MCF 10A (cell line): ENCODE measurements at regions of chrX and their contacts with region 1.

Region 1: DNA sequence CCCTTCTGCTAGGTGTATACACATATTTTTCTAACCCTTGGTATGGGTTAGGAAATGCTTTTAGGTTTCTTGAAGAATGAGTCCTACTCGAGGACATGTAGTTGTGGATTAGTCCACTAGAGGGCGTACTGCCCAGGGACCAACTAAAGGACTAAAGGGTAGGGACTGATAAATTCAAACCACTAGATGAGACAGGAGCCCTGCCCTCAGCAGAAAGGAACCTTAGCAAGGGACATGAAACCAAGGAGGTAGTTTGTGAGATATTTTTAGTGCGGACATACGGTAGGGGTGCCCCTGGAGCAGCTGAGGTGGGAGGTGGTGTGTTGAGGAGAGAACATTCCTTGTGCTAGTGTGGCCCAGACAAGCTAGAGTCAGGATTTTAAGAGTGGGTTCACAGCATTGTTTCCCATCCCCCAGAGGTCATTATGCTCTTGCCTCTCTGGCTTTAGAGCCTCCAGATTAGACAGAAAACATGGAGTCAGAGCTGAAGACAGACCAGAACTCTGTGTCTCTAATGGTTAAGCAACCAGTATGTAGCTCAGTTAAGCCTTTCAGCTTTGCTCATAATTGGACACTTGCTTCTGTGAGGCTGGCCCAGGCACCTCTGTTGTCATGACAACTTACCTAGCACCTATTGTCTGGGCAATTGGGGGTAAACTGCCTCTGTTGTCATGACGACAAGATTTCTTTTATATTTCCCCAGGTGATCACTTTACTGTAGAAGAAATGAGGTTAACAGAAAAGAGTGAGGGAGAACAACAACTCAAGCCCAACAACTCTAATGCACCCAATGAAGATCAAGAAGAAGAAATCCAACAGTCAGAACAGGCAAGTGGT is 1.0 kb downstream of the TMEM31 start:
- DNase-seq: peak; percentile 79
- H3K4me3 Mint-ChIP-seq: no peak overlapping the region
- H3K27ac Mint-ChIP-seq: no peak overlapping the region
- H3K4me1 Mint-ChIP-seq: peaks cover 5% of the 10 kb centered on the region
- H3K27me3 Mint-ChIP-seq: peaks cover 68% of the 10 kb centered on the region
- CTCF ChIP-seq: peak; percentile 54

Region 2: GRCh38 chrX:102784550-102784949 is 927.2 kb before region 1 on chrX:
- CTCF ChIA-PET with region 1: no interaction called
- POLR2A ChIA-PET with region 1: no interaction called
- intact Hi-C with region 1: no loop called
- DNase-seq: no peak
- H3K4me3 Mint-ChIP-seq: no peak overlapping the region
- H3K27ac Mint-ChIP-seq: no peak overlapping the region
- H3K4me1 Mint-ChIP-seq: no peaks in the 10 kb centered on the region
- H3K27me3 Mint-ChIP-seq: peaks cover 42% of the 10 kb centered on the region
- CTCF ChIP-seq: no peak

Region 3: DNA sequence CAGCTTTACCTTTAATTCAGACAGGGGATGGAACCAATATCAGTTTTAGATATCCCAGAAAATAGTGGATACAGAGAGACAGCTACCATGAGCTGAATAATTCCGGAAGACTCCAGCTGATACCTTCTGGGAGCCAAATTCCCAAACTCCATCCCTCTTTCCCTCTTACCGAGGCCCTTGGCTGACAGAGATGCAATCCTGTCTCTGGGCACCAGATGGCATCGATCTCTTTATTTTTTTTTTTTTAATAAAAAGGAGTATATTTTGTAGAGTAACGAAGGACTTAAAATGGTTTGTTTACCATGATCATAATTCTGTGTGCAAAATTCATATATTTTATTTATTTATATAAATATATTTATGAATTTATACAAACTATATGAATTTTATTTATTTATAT is 223.4 kb before region 1 on chrX:
- CTCF ChIA-PET with region 1: no interaction called
- POLR2A ChIA-PET with region 1: no interaction called
- intact Hi-C with region 1: no loop called
- DNase-seq: peak; percentile 41
- H3K4me3 Mint-ChIP-seq: no peak overlapping the region
- H3K27ac Mint-ChIP-seq: no peak overlapping the region
- H3K4me1 Mint-ChIP-seq: no peaks in the 10 kb centered on the region
- H3K27me3 Mint-ChIP-seq: peaks cover 48% of the 10 kb centered on the region
- CTCF ChIP-seq: peak; percentile 53

Region 4: DNA sequence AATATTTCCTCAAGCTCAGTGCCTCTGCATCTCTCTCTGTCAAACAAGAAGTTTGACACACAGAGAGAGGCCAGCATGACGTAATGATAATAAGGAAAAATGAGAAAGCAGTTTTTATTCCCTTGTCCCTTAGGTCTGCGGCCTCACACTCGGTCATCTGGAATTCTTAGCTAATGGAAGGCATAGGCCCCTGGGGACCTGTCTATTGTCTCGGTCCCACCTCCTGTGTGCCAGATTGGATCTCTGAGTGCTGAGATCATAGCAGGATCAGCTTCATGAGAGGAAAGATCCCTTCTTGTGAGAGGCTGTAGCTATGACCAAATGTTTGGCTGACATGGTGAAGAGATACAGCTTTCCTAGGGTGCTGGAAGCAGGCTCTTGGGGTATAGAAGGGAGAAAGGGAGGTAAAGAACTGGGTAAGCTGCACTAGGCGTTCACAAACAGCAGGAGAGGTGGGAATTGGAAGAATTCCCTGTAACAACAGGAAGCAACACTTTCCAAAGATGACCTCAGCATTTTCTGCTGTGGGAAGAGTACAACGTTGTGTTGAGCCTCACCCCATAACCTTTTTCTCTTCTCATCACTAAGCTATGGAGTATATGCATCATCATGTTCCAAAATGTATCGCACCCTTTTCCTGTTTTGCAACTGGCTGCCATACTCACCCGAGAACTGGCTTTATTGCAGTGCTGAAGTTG is 19.2 kb after region 1 on chrX:
- CTCF ChIA-PET with region 1: interaction called, 12 read pairs
- POLR2A ChIA-PET with region 1: interaction called, 3 read pairs
- intact Hi-C with region 1: no loop called
- DNase-seq: peak; percentile 81
- H3K4me3 Mint-ChIP-seq: no peak overlapping the region
- H3K27ac Mint-ChIP-seq: peak overlapping the region; percentile 84
- H3K4me1 Mint-ChIP-seq: peaks cover 27% of the 10 kb centered on the region
- H3K27me3 Mint-ChIP-seq: peaks cover 63% of the 10 kb centered on the region
- CTCF ChIP-seq: no peak

Region 5: DNA sequence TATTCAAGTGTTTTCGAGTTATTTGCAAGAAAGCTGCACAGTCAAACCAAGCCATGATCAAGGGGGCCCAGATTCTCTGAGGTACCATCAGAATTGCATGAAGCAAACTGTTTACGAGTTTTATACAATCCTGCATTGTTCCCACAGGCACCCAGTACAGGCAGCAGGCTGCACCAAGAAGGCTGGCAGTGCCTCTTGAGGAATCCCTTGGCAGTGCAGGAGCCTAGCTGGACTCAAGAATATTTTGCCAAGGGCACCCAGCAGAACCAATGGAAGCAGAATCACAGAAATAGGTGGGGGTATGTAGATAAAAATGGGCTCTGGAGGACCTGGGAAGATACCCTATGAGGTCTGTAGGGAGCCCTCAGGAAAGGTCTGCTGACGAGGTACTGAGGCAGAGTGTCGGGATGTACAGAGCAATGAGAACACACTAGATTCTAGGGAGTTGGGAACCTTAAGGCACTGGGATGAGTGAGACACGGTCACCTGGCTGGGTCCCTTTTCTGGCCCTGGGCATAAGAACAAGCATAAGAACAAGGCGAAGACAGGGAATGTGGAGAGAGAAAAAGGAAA is 62.4 kb after region 1 on chrX:
- CTCF ChIA-PET with region 1: interaction called, 32 read pairs
- POLR2A ChIA-PET with region 1: no interaction called
- intact Hi-C with region 1: loop called (anchors 1 kb)
- DNase-seq: peak; percentile 64
- H3K4me3 Mint-ChIP-seq: no peak overlapping the region
- H3K27ac Mint-ChIP-seq: no peak overlapping the region
- H3K4me1 Mint-ChIP-seq: no peaks in the 10 kb centered on the region
- H3K27me3 Mint-ChIP-seq: peaks cover 62% of the 10 kb centered on the region
- CTCF ChIP-seq: peak; percentile 36